H1 (cell line): ENCODE measurements at regions of chr17 and their contacts with region 1.

Region 1: GRCh38 chr17:40474419-40475002 is 26.9 kb downstream of the TNS4 start:
- DNase-seq: no peak
- H3K4me3 ChIP-seq: no peak overlapping the region
- H3K27ac ChIP-seq: no peak overlapping the region
- H3K4me1 ChIP-seq: peaks cover 3 to 15% (median 10%) of the 10 kb centered on the region in 4 experiments
- H3K27me3 ChIP-seq: no peaks in the 10 kb centered on the region; a peak in 1 of 7 replicates
- CTCF ChIP-seq: no peak
- EP300 ChIP-seq: no peak
- POLR2A ChIP-seq: no peak
- RAD21 ChIP-seq: no peak

Region 2: GRCh38 chr17:40247926-40248495 is 226.5 kb before region 1 on chr17:
- CTCF ChIA-PET with region 1: no interaction called
- POLR2A ChIA-PET with region 1: no interaction called
- DNase-seq: no peak
- H3K4me3 ChIP-seq: no peak overlapping the region
- H3K27ac ChIP-seq: no peak overlapping the region
- H3K4me1 ChIP-seq: no peaks in the 10 kb centered on the region
- H3K27me3 ChIP-seq: no peaks in the 10 kb centered on the region
- CTCF ChIP-seq: no peak
- EP300 ChIP-seq: no peak
- POLR2A ChIP-seq: no peak
- RAD21 ChIP-seq: no peak

Region 3: DNA sequence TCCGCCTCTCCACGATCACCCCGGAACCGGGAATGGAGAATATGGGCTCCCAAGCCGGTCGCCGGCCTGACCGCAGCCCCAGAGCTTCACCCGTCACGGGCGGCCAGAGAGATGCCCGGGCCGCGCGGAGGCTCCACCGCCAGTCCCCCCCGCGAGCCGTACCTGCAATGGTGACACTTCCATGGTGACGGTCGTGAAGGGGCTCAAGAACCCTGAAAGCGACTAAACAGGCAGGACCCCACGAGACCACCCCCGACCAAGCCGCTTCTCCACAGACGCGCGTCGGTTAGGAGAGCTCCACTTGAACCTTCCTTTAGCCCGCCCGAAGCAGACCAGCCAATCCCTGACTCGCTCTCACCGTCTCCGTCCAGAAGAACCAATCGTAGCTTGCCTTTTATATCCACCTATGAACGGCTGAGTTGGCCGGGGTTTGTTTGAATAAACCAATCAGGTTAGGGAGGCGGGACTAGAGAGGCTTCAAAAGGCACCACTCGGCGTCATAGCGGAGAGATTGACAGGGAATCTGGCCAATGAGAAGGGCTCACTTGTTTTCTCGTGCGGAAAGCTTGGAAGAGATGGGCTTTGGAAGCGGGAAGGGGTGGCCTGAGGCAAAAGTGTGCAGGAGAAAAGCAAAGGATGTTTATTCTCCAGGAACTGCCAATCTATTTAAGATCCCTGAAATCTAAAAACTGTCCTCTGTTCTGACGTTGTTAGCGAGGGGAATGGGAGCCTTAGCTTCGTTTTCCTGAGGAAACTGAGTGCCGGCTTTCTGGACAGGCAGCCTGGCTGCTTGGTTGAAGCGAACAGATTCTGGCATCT is 56.7 kb before region 1 on chr17 and contains the start of gene TOP2A:
- CTCF ChIA-PET with region 1: interaction called, 16 read pairs
- POLR2A ChIA-PET with region 1: interaction called, 4 read pairs
- DNase-seq: peak; percentile 98 to 99
- H3K4me3 ChIP-seq: peak within 1 kb of the TSS; percentile 81 to 97 (median 95)
- H3K27ac ChIP-seq: peak within 1 kb of the TSS; percentile 55; the same call in 1 of the 2 replicates
- H3K4me1 ChIP-seq: peaks cover 2 to 10% (median 6%) of the 10 kb centered on the region in 4 experiments
- H3K27me3 ChIP-seq: no peaks in the 10 kb centered on the region
- CTCF ChIP-seq: no peak
- EP300 ChIP-seq: no peak
- POLR2A ChIP-seq: 0 out of 3 replicates have a peak, but pooled peaks of 1 of the 2 experiments have one; percentile 53
- RAD21 ChIP-seq: no peak
- total RNA-seq, gene TOP2A: 276 and 291 TPM in 2 replicates

Region 4: GRCh38 chr17:40433551-40434415 is 40.7 kb before region 1 on chr17:
- CTCF ChIA-PET with region 1: interaction called, 739 read pairs
- POLR2A ChIA-PET with region 1: no interaction called
- DNase-seq: peak in 1 of 2 experiments; percentile 72
- H3K4me3 ChIP-seq: no peak overlapping the region
- H3K27ac ChIP-seq: no peak overlapping the region
- H3K4me1 ChIP-seq: peaks cover 0 to 3% (median 2%) of the 10 kb centered on the region in 4 experiments; a peak in 4 of 7 replicates
- H3K27me3 ChIP-seq: no peaks in the 10 kb centered on the region
- CTCF ChIP-seq: peak; percentile 72 to 91 (median 86)
- EP300 ChIP-seq: no peak
- POLR2A ChIP-seq: 0 out of 3 replicates have a peak, but pooled peaks of 1 of the 2 experiments have one; percentile 26
- RAD21 ChIP-seq: peak; percentile 73 to 76

Region 5: DNA sequence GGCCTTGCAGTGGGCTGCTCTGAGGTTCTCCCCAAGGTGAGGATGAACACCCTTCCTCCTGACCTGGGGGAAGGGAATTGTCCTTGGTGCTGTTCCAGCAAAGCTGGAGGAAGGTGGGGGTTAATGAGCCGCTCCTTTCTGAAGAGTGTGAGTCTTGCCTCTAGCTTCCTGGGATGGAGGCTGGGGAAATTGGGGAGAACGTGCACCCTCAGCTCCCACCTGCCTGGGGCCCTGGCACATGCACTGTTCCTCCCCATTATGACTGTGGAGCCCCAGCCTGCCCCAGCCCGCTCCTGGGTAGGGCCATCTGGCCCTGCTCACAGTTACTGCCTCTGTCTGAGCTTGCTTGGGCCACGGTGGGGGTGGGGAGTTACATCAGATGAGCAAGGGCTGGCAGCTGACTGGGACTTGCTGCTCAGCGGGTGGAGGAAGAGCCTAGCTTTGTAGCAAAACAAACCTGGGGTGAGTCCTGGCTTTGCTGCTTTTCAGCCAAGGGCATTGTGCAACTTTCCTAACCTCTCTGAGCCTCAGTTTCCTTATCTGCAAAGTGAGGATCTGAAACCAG is 15.9 kb after region 1 on chr17:
- CTCF ChIA-PET with region 1: interaction called, 52 read pairs
- POLR2A ChIA-PET with region 1: interaction called, 10 read pairs
- DNase-seq: peak in 1 of 2 experiments; percentile 69
- H3K4me3 ChIP-seq: peak overlapping the region in 1 of 4 experiments; percentile 8; a peak in 1 of 8 replicates
- H3K27ac ChIP-seq: peak overlapping the region; percentile 41; the same call in 1 of the 2 replicates
- H3K4me1 ChIP-seq: peaks cover 9 to 26% (median 24%) of the 10 kb centered on the region in 4 experiments
- H3K27me3 ChIP-seq: no peaks in the 10 kb centered on the region; a peak in 1 of 7 replicates
- CTCF ChIP-seq: no peak
- EP300 ChIP-seq: no peak
- POLR2A ChIP-seq: peak in 1 of 2 experiments; percentile 41; a peak in 1 of 3 replicates
- RAD21 ChIP-seq: no peak

Region 6: DNA sequence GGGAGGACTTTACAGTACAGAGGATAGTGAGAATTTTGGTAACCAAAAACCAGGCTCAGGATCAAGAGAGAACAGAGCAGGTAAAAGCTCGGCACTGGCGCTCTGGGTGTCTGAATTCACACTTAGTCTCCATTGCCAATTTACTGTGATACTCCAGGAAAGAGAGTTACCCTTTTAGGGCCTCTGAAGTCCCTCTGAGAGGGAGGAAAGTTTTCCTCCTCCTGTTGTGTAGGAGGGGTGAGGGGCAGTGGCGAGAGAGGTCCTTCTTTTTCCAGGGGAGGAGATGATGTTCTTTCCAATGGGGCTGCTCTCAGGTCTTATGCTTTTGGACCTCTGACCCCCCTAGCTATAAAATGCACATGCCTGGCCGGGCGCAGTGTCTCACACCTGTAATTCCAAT is 32.3 kb after region 1 on chr17:
- CTCF ChIA-PET with region 1: interaction called, 18 read pairs
- POLR2A ChIA-PET with region 1: interaction called, 3 read pairs
- DNase-seq: no peak
- H3K4me3 ChIP-seq: no peak overlapping the region
- H3K27ac ChIP-seq: no peak overlapping the region
- H3K4me1 ChIP-seq: peaks cover 3 to 11% (median 5%) of the 10 kb centered on the region in 4 experiments; a peak in 5 of 7 replicates
- H3K27me3 ChIP-seq: no peaks in the 10 kb centered on the region
- CTCF ChIP-seq: no peak
- EP300 ChIP-seq: no peak
- POLR2A ChIP-seq: no peak
- RAD21 ChIP-seq: no peak

Region 7: GRCh38 chr17:40531051-40531991 is 56.8 kb after region 1 on chr17:
- CTCF ChIA-PET with region 1: interaction called, 125 read pairs
- POLR2A ChIA-PET with region 1: interaction called, 6 read pairs
- DNase-seq: no peak
- H3K4me3 ChIP-seq: no peak overlapping the region
- H3K27ac ChIP-seq: no peak overlapping the region
- H3K4me1 ChIP-seq: peaks cover 0 to 8% (median 3%) of the 10 kb centered on the region in 4 experiments; a peak in 1 of 7 replicates
- H3K27me3 ChIP-seq: no peaks in the 10 kb centered on the region
- CTCF ChIP-seq: no peak
- EP300 ChIP-seq: no peak
- POLR2A ChIP-seq: no peak
- RAD21 ChIP-seq: no peak

Region 8: GRCh38 chr17:40559954-40560591 is 85.6 kb after region 1 on chr17:
- CTCF ChIA-PET with region 1: interaction called, 35 read pairs
- POLR2A ChIA-PET with region 1: no interaction called
- DNase-seq: peak; percentile 79 to 98
- H3K4me3 ChIP-seq: no peak overlapping the region
- H3K27ac ChIP-seq: no peak overlapping the region
- H3K4me1 ChIP-seq: peaks cover 0 to 5% (median 2%) of the 10 kb centered on the region in 4 experiments; a peak in 5 of 7 replicates
- H3K27me3 ChIP-seq: no peaks in the 10 kb centered on the region; a peak in 1 of 7 replicates
- CTCF ChIP-seq: peak; percentile 97 to 99 (median 97)
- EP300 ChIP-seq: no peak
- POLR2A ChIP-seq: no peak
- RAD21 ChIP-seq: peak; percentile 98 to 99

Region 9: GRCh38 chr17:40664582-40665333 is 190.2 kb after region 1 on chr17 and contains the start of gene KRT222:
- CTCF ChIA-PET with region 1: no interaction called
- POLR2A ChIA-PET with region 1: no interaction called
- DNase-seq: no peak
- H3K4me3 ChIP-seq: peak within 1 kb of the TSS in 3 of 4 experiments; percentile 8 to 54 (median 30); a peak in 3 of 8 replicates
- H3K27ac ChIP-seq: no peak within 1 kb of the TSS
- H3K4me1 ChIP-seq: peaks cover 0 to 2% (median 0%) of the 10 kb centered on the region in 4 experiments; a peak in 2 of 7 replicates
- H3K27me3 ChIP-seq: no peaks in the 10 kb centered on the region
- CTCF ChIP-seq: no peak
- EP300 ChIP-seq: no peak
- POLR2A ChIP-seq: no peak
- RAD21 ChIP-seq: no peak
- total RNA-seq, gene KRT222: 0.61 and 0.75 TPM in 2 replicates